ENCODE measurements at regions of chr19 and their contacts with region 1.

Region 1: DNA sequence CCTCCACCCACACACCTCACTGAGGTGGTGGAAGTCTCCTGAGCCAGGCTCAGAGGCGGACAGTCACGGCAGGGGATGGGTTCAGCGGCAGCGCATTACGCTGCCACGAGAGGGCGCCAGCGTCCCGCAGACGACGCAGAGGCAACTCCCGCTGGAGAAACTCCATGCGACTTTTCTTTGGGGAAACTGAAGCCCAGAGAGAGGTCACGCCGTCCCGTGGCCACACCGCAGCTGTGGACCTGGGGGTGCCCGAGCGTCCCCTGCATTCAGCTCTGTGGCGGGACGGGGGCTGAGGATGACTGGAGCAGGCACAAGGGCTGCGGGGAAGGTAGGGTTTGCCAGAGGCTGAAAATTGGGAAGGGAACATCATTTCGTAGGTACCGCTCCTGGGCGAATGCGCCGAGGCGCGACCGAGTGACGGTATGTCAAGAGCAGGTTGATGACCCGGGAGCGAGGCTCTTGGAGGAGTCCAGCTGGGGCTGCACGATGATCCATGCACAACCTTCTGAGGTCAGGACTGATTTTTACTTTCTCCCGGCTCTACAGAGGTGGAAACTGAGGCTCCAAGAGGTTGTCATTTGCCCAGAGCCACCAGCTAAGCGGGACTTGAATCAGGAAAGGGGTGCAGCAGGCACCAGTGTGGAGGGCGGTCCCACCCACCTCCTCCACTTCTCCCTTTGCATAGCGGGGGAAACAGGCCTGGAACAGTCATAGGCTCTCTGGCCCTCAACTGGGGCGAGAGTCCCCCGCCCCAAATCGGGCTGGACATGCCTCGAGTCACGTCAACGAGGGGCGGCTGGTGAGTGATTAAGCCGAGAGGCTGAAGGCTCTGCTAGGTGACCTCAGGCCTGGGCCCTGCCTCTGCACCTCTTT is 690 bp upstream of the ARRDC2 start:
- DNase-seq: peak; percentile 70 to 88 (median 82)
- ATAC-seq: peak; percentile 74
- H3K4me3 ChIP-seq: peak overlapping the region; percentile 53
- H3K4me3 Mint-ChIP-seq: peak overlapping the region; percentile 86 to 98 (median 92)
- H3K27ac ChIP-seq: peak overlapping the region; percentile 91
- H3K27ac Mint-ChIP-seq: peak overlapping the region; percentile 71 to 99 (median 94)
- H3K4me1 ChIP-seq: peaks cover 28 to 36% of the 10 kb centered on the region in 2 donors
- H3K4me1 Mint-ChIP-seq: peaks cover 19 to 45% (median 28%) of the 10 kb centered on the region in 7 donors
- H3K27me3 ChIP-seq: no peaks in the 10 kb centered on the region
- H3K27me3 Mint-ChIP-seq: no peaks in the 10 kb centered on the region

Region 2: GRCh38 chr19:18021121-18021755 is 14.0 kb after region 1 on chr19:
- CTCF ChIA-PET with region 1: interaction called, 11 read pairs
- POLR2A ChIA-PET with region 1: interaction called, 961 read pairs
- intact Hi-C with region 1: loop called in 1 of 2 experiments (anchors 1 kb)
- DNase-seq: peak in 6 of 9 donors; percentile 45 to 81 (median 53)
- ATAC-seq: peak; percentile 57
- H3K4me3 ChIP-seq: no peak overlapping the region
- H3K4me3 Mint-ChIP-seq: peak overlapping the region; percentile 53 to 92 (median 67)
- H3K27ac ChIP-seq: peak overlapping the region; percentile 95
- H3K27ac Mint-ChIP-seq: peak overlapping the region; percentile 92 to 100 (median 99)
- H3K4me1 ChIP-seq: peaks cover 22 to 57% of the 10 kb centered on the region in 2 donors
- H3K4me1 Mint-ChIP-seq: peaks cover 53 to 78% (median 67%) of the 10 kb centered on the region in 7 donors
- H3K27me3 ChIP-seq: no peaks in the 10 kb centered on the region
- H3K27me3 Mint-ChIP-seq: no peaks in the 10 kb centered on the region

Region 3: DNA sequence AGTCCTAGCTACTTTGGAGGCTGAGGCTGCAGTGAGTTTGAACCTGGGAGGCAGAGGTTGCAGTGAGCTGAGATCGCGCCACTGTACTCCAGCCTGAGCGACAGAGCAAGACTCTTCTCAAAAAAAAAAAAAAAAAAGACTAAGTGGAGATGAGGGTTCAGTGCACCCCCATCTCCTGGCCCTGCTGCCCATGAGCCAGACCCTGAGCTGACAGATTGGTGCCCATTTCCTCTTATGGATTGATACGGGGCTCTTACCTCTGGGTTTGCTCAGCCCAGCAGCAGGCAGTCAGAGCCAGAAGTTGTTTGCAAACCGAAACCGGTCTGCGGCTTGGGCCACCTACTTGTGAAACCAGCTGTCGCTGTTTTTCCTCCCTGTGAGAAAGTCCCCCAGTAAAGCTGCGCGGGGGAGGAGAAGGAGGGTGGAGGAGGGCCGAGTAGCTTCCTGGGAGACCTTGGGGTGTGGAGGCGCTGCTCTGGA is 37.6 kb after region 1 on chr19:
- CTCF ChIA-PET with region 1: interaction called, 10 read pairs
- POLR2A ChIA-PET with region 1: interaction called, 961 read pairs
- intact Hi-C with region 1: loop called (anchors 1 kb)
- DNase-seq: peak; percentile 51 to 87 (median 78)
- ATAC-seq: peak; percentile 97
- H3K4me3 ChIP-seq: peak overlapping the region; percentile 79
- H3K4me3 Mint-ChIP-seq: peak overlapping the region; percentile 66 to 90 (median 86)
- H3K27ac ChIP-seq: peak overlapping the region; percentile 76
- H3K27ac Mint-ChIP-seq: peak overlapping the region; percentile 81 to 98 (median 95)
- H3K4me1 ChIP-seq: peaks cover 12 to 31% of the 10 kb centered on the region in 2 donors
- H3K4me1 Mint-ChIP-seq: peaks cover 35 to 60% (median 55%) of the 10 kb centered on the region in 7 donors
- H3K27me3 ChIP-seq: no peaks in the 10 kb centered on the region
- H3K27me3 Mint-ChIP-seq: peaks cover 0 to 10% (median 0%) of the 10 kb centered on the region in 5 donors

Region 4: GRCh38 chr19:18091217-18091608 is 83.9 kb after region 1 on chr19:
- CTCF ChIA-PET with region 1: interaction called, 6 read pairs
- POLR2A ChIA-PET with region 1: interaction called, 11 read pairs
- intact Hi-C with region 1: no loop called
- DNase-seq: peak; percentile 52 to 84 (median 79)
- ATAC-seq: peak; percentile 84
- H3K4me3 ChIP-seq: no peak overlapping the region
- H3K4me3 Mint-ChIP-seq: peak overlapping the region; percentile 59 to 95 (median 74)
- H3K27ac ChIP-seq: peak overlapping the region; percentile 82
- H3K27ac Mint-ChIP-seq: peak overlapping the region; percentile 94 to 99 (median 98)
- H3K4me1 ChIP-seq: peaks cover 54 to 69% of the 10 kb centered on the region in 2 donors
- H3K4me1 Mint-ChIP-seq: peaks cover 35 to 79% (median 64%) of the 10 kb centered on the region in 7 donors
- H3K27me3 ChIP-seq: no peaks in the 10 kb centered on the region
- H3K27me3 Mint-ChIP-seq: no peaks in the 10 kb centered on the region

Region 5: GRCh38 chr19:18167975-18168645 is 160.8 kb after region 1 on chr19:
- CTCF ChIA-PET with region 1: no interaction called
- POLR2A ChIA-PET with region 1: no interaction called
- intact Hi-C with region 1: loop called (anchors 1 kb)
- DNase-seq: peak in 7 of 9 donors; percentile 32 to 70 (median 59)
- ATAC-seq: peak; percentile 71
- H3K4me3 ChIP-seq: no peak overlapping the region
- H3K4me3 Mint-ChIP-seq: no peak overlapping the region
- H3K27ac ChIP-seq: no peak overlapping the region
- H3K27ac Mint-ChIP-seq: peak overlapping the region in 2 of 9 donors; percentile 5 to 65
- H3K4me1 ChIP-seq: peaks cover 0 to under 1% of the 10 kb centered on the region in 2 donors
- H3K4me1 Mint-ChIP-seq: peaks cover 0 to 14% (median 4%) of the 10 kb centered on the region in 7 donors
- H3K27me3 ChIP-seq: no peaks in the 10 kb centered on the region
- H3K27me3 Mint-ChIP-seq: no peaks in the 10 kb centered on the region

Region 6: DNA sequence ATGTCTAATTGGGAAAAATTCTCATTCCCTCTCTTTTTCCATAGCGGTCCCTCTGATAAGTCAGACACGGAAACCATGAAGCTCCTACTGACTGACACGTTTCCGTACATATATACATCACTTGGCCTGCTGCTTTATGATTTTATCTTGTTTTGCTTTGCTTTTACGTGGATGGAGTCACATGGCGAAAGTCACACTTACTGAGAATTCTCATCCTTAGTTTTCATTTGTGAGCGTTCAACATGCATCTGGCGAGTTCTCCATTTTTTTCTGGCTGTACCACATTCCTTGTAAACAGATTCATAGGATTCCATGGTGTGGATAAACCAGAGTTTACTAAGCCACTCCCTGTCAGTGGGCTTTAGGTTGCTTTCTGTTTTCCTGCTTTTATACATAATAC is 354.4 kb after region 1 on chr19:
- CTCF ChIA-PET with region 1: no interaction called
- POLR2A ChIA-PET with region 1: no interaction called
- intact Hi-C with region 1: no loop called
- DNase-seq: no peak
- ATAC-seq: no peak
- H3K4me3 ChIP-seq: no peak overlapping the region
- H3K4me3 Mint-ChIP-seq: no peak overlapping the region
- H3K27ac ChIP-seq: no peak overlapping the region
- H3K27ac Mint-ChIP-seq: peak overlapping the region in 1 of 9 donors; percentile 55
- H3K4me1 ChIP-seq: no peaks in the 10 kb centered on the region
- H3K4me1 Mint-ChIP-seq: no peaks in the 10 kb centered on the region
- H3K27me3 ChIP-seq: no peaks in the 10 kb centered on the region
- H3K27me3 Mint-ChIP-seq: no peaks in the 10 kb centered on the region